IMR-90 (cell line): ENCODE measurements at regions of chr4 and their contacts with region 1.

Region 1: GRCh38 chr4:46270986-46271596 is 118.8 kb downstream of the GABRA2 start:
- DNase-seq: peak; percentile 4
- ATAC-seq: 0 out of 2 replicates have a peak, but pooled peaks have one; percentile 32
- H3K4me3 ChIP-seq: no peak overlapping the region
- H3K27ac ChIP-seq: no peak overlapping the region
- H3K4me1 ChIP-seq: no peaks in the 10 kb centered on the region
- H3K27me3 ChIP-seq: no peaks in the 10 kb centered on the region
- CTCF ChIP-seq: peak; percentile 43
- POLR2A ChIP-seq: no peak
- RAD21 ChIP-seq: peak; percentile 31

Region 2: GRCh38 chr4:44760142-44760898 is 1510.8 kb before region 1 on chr4:
- CTCF ChIA-PET with region 1: no interaction called
- POLR2A ChIA-PET with region 1: no interaction called
- dilution Hi-C with region 1: no loop called
- in situ Hi-C with region 1: no loop called
- intact Hi-C with region 1: loop called (anchors 2 kb)
- DNase-seq: peak; percentile 20
- ATAC-seq: peak; percentile 62
- H3K4me3 ChIP-seq: no peak overlapping the region
- H3K27ac ChIP-seq: no peak overlapping the region
- H3K4me1 ChIP-seq: no peaks in the 10 kb centered on the region
- H3K27me3 ChIP-seq: no peaks in the 10 kb centered on the region
- CTCF ChIP-seq: peak; percentile 54
- POLR2A ChIP-seq: no peak
- RAD21 ChIP-seq: peak; percentile 20; the same call in 1 of the 2 replicates

Region 3: GRCh38 chr4:44927399-44928380 is 1343.4 kb before region 1 on chr4:
- CTCF ChIA-PET with region 1: no interaction called
- POLR2A ChIA-PET with region 1: no interaction called
- dilution Hi-C with region 1: no loop called
- in situ Hi-C with region 1: no loop called
- intact Hi-C with region 1: loop called (anchors 5 kb)
- DNase-seq: peak; percentile 14
- ATAC-seq: no peak
- H3K4me3 ChIP-seq: no peak overlapping the region
- H3K27ac ChIP-seq: no peak overlapping the region
- H3K4me1 ChIP-seq: no peaks in the 10 kb centered on the region
- H3K27me3 ChIP-seq: no peaks in the 10 kb centered on the region
- CTCF ChIP-seq: peak; percentile 50
- POLR2A ChIP-seq: no peak
- RAD21 ChIP-seq: peak; percentile 46; the same call in 1 of the 2 replicates

Region 4: GRCh38 chr4:46081674-46082073 is 189.4 kb before region 1 on chr4:
- CTCF ChIA-PET with region 1: no interaction called
- POLR2A ChIA-PET with region 1: no interaction called
- dilution Hi-C with region 1: no loop called
- in situ Hi-C with region 1: no loop called
- intact Hi-C with region 1: no loop called
- DNase-seq: no peak
- ATAC-seq: no peak
- H3K4me3 ChIP-seq: no peak overlapping the region
- H3K27ac ChIP-seq: no peak overlapping the region
- H3K4me1 ChIP-seq: no peaks in the 10 kb centered on the region
- H3K27me3 ChIP-seq: no peaks in the 10 kb centered on the region
- CTCF ChIP-seq: no peak
- POLR2A ChIP-seq: no peak
- RAD21 ChIP-seq: no peak

Region 5: DNA sequence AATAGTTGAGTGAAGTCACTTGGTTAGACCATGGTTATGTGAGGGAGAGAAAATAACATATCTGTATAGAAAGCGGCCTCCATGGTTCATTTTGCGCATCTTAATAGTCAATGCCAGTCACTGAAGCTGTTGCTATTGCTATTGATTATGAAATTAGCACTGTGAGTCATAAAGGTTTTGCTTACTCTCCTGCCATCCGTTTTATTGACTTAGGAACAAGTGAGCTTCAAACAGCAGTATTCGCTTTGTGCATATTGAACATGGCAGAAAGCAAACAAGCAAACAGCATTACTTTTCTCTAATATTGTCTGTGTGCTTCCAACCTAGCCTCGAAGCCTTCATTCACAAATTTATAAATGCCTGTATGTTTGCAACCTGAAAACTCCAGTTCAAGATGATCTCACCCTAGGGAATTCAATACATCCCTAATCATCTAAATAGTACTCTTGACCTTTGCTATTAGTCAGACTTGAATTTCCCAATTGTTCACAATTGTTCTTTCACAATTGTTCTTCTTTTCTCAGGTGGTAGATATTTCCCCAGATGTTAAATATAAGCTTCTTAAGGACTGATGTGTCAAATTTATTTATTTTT is 174.7 kb after region 1 on chr4:
- CTCF ChIA-PET with region 1: no interaction called
- POLR2A ChIA-PET with region 1: no interaction called
- dilution Hi-C with region 1: no loop called
- in situ Hi-C with region 1: no loop called
- intact Hi-C with region 1: no loop called
- DNase-seq: peak; percentile 61
- ATAC-seq: no peak
- H3K4me3 ChIP-seq: no peak overlapping the region
- H3K27ac ChIP-seq: no peak overlapping the region
- H3K4me1 ChIP-seq: peaks cover 2% of the 10 kb centered on the region; the same call in 1 of the 2 replicates
- H3K27me3 ChIP-seq: no peaks in the 10 kb centered on the region
- CTCF ChIP-seq: no peak
- POLR2A ChIP-seq: no peak
- RAD21 ChIP-seq: no peak

Region 6: DNA sequence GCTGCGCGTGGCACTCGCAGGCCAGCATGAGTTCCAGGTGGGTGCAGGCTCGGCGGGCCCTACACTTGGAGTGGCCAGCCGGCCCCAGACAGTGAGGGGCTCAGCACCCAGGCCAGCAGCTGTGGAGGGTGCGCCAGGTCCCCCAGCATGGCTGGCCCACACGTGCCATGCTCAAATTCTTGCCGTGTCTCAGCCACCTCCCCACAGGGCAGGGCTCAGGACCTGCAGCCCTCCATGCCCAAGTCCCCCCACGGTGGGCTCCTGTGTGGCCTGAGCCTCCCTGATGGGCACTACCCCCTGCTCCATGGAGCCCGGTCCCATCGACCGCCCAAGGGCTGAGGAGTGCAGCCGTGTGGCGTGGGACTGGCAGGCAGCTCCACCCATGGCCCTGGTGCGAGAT is 427.8 kb after region 1 on chr4:
- CTCF ChIA-PET with region 1: no interaction called
- POLR2A ChIA-PET with region 1: no interaction called
- dilution Hi-C with region 1: no loop called
- in situ Hi-C with region 1: no loop called
- intact Hi-C with region 1: no loop called
- DNase-seq: no peak
- ATAC-seq: no peak
- H3K4me3 ChIP-seq: no peak overlapping the region
- H3K27ac ChIP-seq: no peak overlapping the region
- H3K4me1 ChIP-seq: no peaks in the 10 kb centered on the region
- H3K27me3 ChIP-seq: no peaks in the 10 kb centered on the region
- CTCF ChIP-seq: no peak
- POLR2A ChIP-seq: no peak
- RAD21 ChIP-seq: no peak